ENCODE measurements at regions of chr12 and their contacts with region 1.

Region 1: DNA sequence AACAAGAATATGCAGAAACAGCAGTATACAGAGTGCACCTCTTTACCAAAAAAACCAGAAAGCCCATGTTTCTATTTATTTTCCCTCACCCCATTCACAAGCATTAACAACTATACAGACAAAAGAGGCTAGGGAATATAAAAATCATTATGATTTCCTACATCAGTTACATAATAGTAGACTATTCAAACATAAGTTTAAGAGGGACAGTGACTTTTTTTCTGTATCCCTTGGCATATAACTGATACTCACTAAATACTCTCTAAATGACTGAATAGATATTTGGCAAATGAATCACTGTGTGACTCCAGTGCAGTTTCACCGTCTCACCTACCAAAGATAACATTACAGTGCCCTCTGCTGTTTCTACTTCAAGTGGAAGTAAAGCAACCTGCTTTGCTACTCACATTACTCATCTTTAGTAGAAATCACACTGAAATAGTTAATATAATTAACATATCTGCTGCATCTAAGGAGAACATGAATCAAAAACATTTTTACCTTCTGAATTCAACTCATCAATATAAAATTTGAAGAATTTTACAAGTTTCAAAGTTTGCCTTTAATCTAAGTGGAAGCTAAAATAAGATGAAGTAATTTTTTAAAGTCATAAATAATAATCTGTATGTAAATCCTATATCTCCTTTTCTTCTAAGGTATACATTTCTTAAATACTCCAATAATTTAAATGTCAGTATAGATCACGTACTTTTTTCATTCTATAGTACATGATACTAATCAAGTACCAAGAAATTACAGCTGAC is 103.8 kb downstream of the OSBPL8 start:
- H3K4me3 ChIP-seq: no peak overlapping the region
- H3K27ac ChIP-seq: no peak overlapping the region
- H3K4me1 ChIP-seq: 0 out of 2 replicates have a peak, but pooled peaks cover 3% of the 10 kb centered on the region
- CTCF ChIP-seq: 0 out of 2 replicates have a peak, but pooled peaks have one; percentile 26

Region 2: GRCh38 chr12:76348079-76348901 is 107.5 kb before region 1 on chr12 and contains the start of gene BBS10:
- CTCF ChIA-PET with region 1: interaction called, 10 read pairs
- POLR2A ChIA-PET with region 1: interaction called, 3 read pairs
- H3K4me3 ChIP-seq: peak within 1 kb of the TSS; percentile 98
- H3K27ac ChIP-seq: peak within 1 kb of the TSS; percentile 78
- H3K4me1 ChIP-seq: peaks cover 5% of the 10 kb centered on the region; the same call in 1 of the 2 replicates
- CTCF ChIP-seq: peak; percentile 75

Region 3: DNA sequence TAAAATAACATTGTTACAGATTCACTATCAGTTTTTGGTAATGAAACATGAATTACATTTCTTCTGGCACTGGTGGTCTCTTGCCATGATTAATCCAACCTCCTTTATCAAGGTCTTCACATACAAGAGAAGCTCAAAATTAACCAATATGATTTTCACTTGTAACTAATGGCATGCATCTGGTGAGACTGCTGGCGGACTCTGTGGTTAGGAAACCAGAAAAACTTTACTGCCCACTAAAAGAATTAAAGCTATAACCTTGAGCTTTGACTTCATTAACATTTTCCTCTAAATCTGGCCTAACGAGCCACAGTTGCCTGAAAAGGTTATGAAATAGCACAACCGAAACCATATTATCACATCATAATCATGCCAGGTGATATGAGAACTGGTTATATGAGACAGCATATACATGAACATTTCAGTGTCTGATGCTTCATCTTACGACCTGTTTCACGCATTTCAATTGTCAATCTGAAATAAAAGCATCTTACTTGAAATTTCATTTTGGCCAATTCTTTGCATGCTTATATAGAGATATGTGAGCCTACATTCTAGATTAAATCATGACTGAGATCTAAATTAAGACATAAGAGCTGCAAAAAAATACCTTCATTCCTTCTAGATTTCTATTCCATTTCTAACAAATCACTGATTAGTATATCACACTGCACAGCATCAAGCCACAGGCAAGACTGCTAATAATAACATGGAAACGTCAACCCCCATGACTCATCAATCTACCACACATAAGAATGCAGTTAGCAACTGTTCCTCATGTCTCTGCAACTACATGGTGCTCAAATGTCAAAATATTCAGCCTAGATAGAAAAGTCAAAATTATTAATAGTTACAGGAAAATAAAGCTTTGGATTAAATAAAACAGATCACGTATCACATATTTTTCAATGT is 14.5 kb after region 1 on chr12:
- CTCF ChIA-PET with region 1: interaction called, 10 read pairs
- POLR2A ChIA-PET with region 1: no interaction called
- H3K4me3 ChIP-seq: no peak overlapping the region
- H3K27ac ChIP-seq: no peak overlapping the region
- H3K4me1 ChIP-seq: peaks cover 6% of the 10 kb centered on the region; the same call in 1 of the 2 replicates
- CTCF ChIP-seq: no peak

Region 4: GRCh38 chr12:76636121-76636692 is 180.4 kb after region 1 on chr12:
- CTCF ChIA-PET with region 1: no interaction called
- POLR2A ChIA-PET with region 1: no interaction called
- H3K4me3 ChIP-seq: no peak overlapping the region
- H3K27ac ChIP-seq: no peak overlapping the region; the same call in 1 of the 2 replicates
- H3K4me1 ChIP-seq: peaks cover 22% of the 10 kb centered on the region
- CTCF ChIP-seq: no peak